ENCODE measurements at regions of chr17 and their contacts with region 1.

Region 1: GRCh38 chr17:44503147-44504029 is at the start of gene GPATCH8:
- DNase-seq: peak; percentile 97
- ATAC-seq: peak; percentile 93
- H3K4me3 ChIP-seq: peak within 1 kb of the TSS; percentile 70 to 88 (median 85)
- H3K27ac ChIP-seq: peak within 1 kb of the TSS; percentile 93
- H3K4me1 ChIP-seq: peaks cover 65% of the 10 kb centered on the region
- H3K27me3 ChIP-seq: no peaks in the 10 kb centered on the region; a peak in 1 of 5 replicates
- CTCF ChIP-seq: no peak
- EP300 ChIP-seq: no peak
- POLR2A ChIP-seq: peak; percentile 87 to 92
- RAD21 ChIP-seq: peak; percentile 31; the same call in 1 of the 2 replicates
- total RNA-seq, gene GPATCH8: 21.5 and 37.7 TPM in 2 replicates

Region 2: GRCh38 chr17:44444735-44445105 is 58.7 kb before region 1 on chr17:
- CTCF ChIA-PET with region 1: no interaction called
- POLR2A ChIA-PET with region 1: no interaction called
- in situ Hi-C with region 1: no loop called
- intact Hi-C with region 1: loop called (anchors 5 kb)
- DNase-seq: no peak
- ATAC-seq: no peak
- H3K4me3 ChIP-seq: no peak overlapping the region
- H3K27ac ChIP-seq: no peak overlapping the region
- H3K4me1 ChIP-seq: no peaks in the 10 kb centered on the region
- H3K27me3 ChIP-seq: no peaks in the 10 kb centered on the region; a peak in 1 of 5 replicates
- CTCF ChIP-seq: no peak
- EP300 ChIP-seq: no peak
- POLR2A ChIP-seq: no peak
- RAD21 ChIP-seq: no peak

Region 3: DNA sequence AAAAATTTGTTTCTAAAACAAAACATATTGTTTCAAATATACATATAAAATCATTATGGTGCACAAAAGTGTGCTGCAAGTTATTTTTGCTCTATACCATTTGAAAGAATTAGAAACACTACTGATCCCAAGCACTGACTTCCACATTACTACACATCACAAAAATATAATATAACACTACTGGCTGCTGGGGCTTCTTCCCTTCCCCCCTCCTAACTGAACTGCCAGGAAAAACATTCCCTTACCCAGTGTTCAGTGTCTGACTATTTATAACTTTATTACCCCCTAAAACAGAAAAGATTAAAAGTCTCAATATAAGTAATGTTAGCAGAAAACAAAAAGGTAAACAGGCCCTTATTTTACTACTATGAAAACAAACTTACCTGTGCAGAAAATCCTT is 37.0 kb before region 1 on chr17:
- CTCF ChIA-PET with region 1: no interaction called
- POLR2A ChIA-PET with region 1: interaction called, 4 read pairs
- in situ Hi-C with region 1: no loop called
- intact Hi-C with region 1: loop called (anchors 5 kb)
- DNase-seq: no peak
- ATAC-seq: no peak
- H3K4me3 ChIP-seq: no peak overlapping the region
- H3K27ac ChIP-seq: no peak overlapping the region
- H3K4me1 ChIP-seq: peaks cover 30% of the 10 kb centered on the region
- H3K27me3 ChIP-seq: no peaks in the 10 kb centered on the region
- CTCF ChIP-seq: no peak
- EP300 ChIP-seq: no peak
- POLR2A ChIP-seq: no peak
- RAD21 ChIP-seq: no peak

Region 4: DNA sequence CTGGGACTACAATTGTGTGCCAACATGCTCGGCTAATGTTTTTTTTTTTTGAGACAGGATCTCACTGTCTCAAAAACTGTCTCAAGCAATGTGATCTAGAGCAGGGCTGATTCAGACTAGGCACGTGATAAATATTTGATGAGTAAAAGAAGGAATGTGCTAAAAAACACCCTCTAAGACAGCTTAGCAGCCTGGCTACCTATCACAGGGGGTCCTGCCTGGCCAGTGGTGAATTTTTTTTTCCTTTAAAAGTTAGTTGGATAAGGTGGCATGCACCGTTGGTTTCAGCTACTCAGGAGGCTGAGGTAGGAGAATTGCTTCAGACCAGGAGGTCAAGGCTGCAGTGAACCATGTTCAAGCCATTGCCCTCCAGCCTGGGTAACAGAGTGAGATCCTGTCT is 14.6 kb after region 1 on chr17:
- CTCF ChIA-PET with region 1: no interaction called
- POLR2A ChIA-PET with region 1: interaction called, 12 read pairs
- in situ Hi-C with region 1: no loop called
- intact Hi-C with region 1: no loop called
- DNase-seq: no peak
- ATAC-seq: no peak
- H3K4me3 ChIP-seq: no peak overlapping the region
- H3K27ac ChIP-seq: no peak overlapping the region
- H3K4me1 ChIP-seq: peaks cover 16% of the 10 kb centered on the region
- H3K27me3 ChIP-seq: no peaks in the 10 kb centered on the region; a peak in 2 of 5 replicates
- CTCF ChIP-seq: no peak
- EP300 ChIP-seq: no peak
- POLR2A ChIP-seq: no peak
- RAD21 ChIP-seq: no peak

Region 5: GRCh38 chr17:44522883-44523671 is 19.7 kb after region 1 on chr17:
- CTCF ChIA-PET with region 1: no interaction called
- POLR2A ChIA-PET with region 1: interaction called, 10 read pairs
- in situ Hi-C with region 1: no loop called
- intact Hi-C with region 1: no loop called
- DNase-seq: peak; percentile 82
- ATAC-seq: peak; percentile 99
- H3K4me3 ChIP-seq: peak overlapping the region; percentile 39 to 64 (median 45)
- H3K27ac ChIP-seq: no peak overlapping the region
- H3K4me1 ChIP-seq: peaks cover 7% of the 10 kb centered on the region
- H3K27me3 ChIP-seq: no peaks in the 10 kb centered on the region; a peak in 1 of 5 replicates
- CTCF ChIP-seq: peak; percentile 98
- EP300 ChIP-seq: no peak
- POLR2A ChIP-seq: no peak
- RAD21 ChIP-seq: peak; percentile 95

Measured in HepG2 (cell line).